CD4-positive, alpha-beta T cell (primary cell): ENCODE measurements at regions of chr12 and their contacts with region 1.

Region 1: DNA sequence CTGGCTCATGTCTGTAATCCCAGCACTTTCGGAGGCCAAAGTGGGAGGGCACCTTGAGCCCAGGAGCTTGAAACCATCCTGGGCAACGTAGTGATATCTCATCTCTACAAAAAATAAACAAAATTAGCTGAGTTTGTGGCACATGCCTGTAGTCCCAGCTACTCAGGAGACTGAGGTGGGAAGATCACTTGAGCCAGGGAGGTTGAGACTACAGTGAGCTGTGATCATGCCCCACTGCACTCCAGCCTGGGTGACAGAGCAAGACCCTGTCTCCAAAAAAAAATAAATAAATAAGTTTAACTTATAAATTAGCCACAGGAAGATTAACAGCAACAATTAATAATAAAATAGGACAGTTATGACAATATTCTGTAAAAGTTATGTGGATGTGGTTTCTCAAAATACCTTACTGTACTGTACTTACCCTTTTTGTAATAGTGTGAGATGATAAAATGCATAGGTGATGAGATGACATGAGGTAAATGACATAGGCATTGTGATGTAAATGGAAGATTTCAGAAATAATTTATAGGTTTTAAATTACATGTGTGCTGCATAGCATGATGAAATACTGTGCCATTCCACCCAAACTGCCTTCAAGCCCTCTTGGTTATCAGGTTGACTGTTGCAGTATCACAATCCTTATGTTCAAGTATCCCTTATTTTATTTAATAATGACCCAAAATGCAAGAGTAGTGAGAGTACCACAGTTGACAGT is 22.0 kb downstream of the USP15 start:
- DNase-seq: no peak
- ATAC-seq: no peak
- H3K4me3 ChIP-seq: no peak overlapping the region
- H3K4me3 Mint-ChIP-seq: no peak overlapping the region
- H3K27ac ChIP-seq: no peak overlapping the region
- H3K27ac Mint-ChIP-seq: peak overlapping the region; percentile 60
- H3K4me1 ChIP-seq: peaks cover 12% of the 10 kb centered on the region
- H3K4me1 Mint-ChIP-seq: peaks cover 86% of the 10 kb centered on the region
- H3K27me3 ChIP-seq: no peaks in the 10 kb centered on the region
- H3K27me3 Mint-ChIP-seq: no peaks in the 10 kb centered on the region
- CTCF ChIP-seq: no peak

Region 2: GRCh38 chr12:62268956-62269355 is 13.3 kb before region 1 on chr12:
- CTCF ChIA-PET with region 1: no interaction called
- POLR2A ChIA-PET with region 1: no interaction called
- intact Hi-C with region 1: loop called in 1 of 2 experiments (anchors 2 kb)
- DNase-seq: no peak
- ATAC-seq: no peak
- H3K4me3 ChIP-seq: no peak overlapping the region
- H3K4me3 Mint-ChIP-seq: peak overlapping the region; percentile 35
- H3K27ac ChIP-seq: no peak overlapping the region
- H3K27ac Mint-ChIP-seq: peak overlapping the region; percentile 18
- H3K4me1 ChIP-seq: peaks cover 12% of the 10 kb centered on the region
- H3K4me1 Mint-ChIP-seq: peaks cover 93% of the 10 kb centered on the region
- H3K27me3 ChIP-seq: no peaks in the 10 kb centered on the region
- H3K27me3 Mint-ChIP-seq: no peaks in the 10 kb centered on the region
- CTCF ChIP-seq: no peak

Region 3: DNA sequence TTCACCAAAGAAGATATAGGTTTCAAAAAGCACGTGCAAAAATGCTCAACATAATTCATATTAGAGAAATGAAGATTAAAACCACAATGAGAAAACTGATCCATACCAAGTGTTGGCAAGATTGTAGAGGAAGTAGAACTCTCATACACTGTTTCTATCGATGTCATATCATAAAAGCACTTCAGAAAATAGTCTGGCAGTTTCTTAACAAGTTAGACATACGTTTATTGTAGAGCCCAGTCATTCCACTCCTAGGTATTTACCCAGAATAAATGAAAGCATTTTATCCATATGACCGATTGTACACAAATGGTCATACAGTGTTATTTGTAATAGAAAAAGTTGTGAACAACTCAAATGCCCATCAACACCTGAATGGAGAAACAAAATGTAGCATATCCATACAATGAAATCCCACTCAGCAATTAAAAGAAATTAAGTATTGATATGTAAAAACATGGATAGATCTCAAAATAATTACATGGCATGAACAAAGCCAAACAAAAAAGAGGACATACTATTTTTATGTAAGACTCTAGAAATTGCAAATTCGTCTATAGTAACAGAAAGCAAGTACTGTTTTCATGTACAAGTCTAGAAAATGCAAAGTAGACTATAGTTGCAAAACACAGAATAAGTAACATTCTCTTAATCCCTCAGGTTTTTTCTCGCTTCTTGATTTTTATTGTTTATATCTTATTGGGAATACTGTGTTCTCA is 19.0 kb after region 1 on chr12:
- CTCF ChIA-PET with region 1: no interaction called
- POLR2A ChIA-PET with region 1: no interaction called
- intact Hi-C with region 1: loop called in 1 of 2 experiments (anchors 2 kb)
- DNase-seq: no peak
- ATAC-seq: no peak
- H3K4me3 ChIP-seq: no peak overlapping the region
- H3K4me3 Mint-ChIP-seq: no peak overlapping the region
- H3K27ac ChIP-seq: no peak overlapping the region
- H3K27ac Mint-ChIP-seq: peak overlapping the region; percentile 62
- H3K4me1 ChIP-seq: peaks cover 4% of the 10 kb centered on the region
- H3K4me1 Mint-ChIP-seq: peaks cover 76% of the 10 kb centered on the region
- H3K27me3 ChIP-seq: no peaks in the 10 kb centered on the region
- H3K27me3 Mint-ChIP-seq: no peaks in the 10 kb centered on the region
- CTCF ChIP-seq: no peak

Region 4: GRCh38 chr12:62313727-62314380 is 31.6 kb after region 1 on chr12:
- CTCF ChIA-PET with region 1: no interaction called
- POLR2A ChIA-PET with region 1: no interaction called
- intact Hi-C with region 1: loop called in 1 of 2 experiments (anchors 5 kb)
- DNase-seq: no peak
- ATAC-seq: no peak
- H3K4me3 ChIP-seq: no peak overlapping the region
- H3K4me3 Mint-ChIP-seq: no peak overlapping the region
- H3K27ac ChIP-seq: no peak overlapping the region
- H3K27ac Mint-ChIP-seq: no peak overlapping the region
- H3K4me1 ChIP-seq: no peaks in the 10 kb centered on the region
- H3K4me1 Mint-ChIP-seq: peaks cover 64% of the 10 kb centered on the region
- H3K27me3 ChIP-seq: no peaks in the 10 kb centered on the region
- H3K27me3 Mint-ChIP-seq: no peaks in the 10 kb centered on the region
- CTCF ChIP-seq: peak; percentile 10